Common myeloid progenitor, CD34-positive (primary cell): ENCODE measurements at regions of chr4 and their contacts with region 1.

Region 1: GRCh38 chr4:683982-684622 is 4.8 kb downstream of the SLC49A3 start:
- DNase-seq: peak; percentile 61 to 79 (median 79)
- H3K4me3 ChIP-seq: peak overlapping the region in 1 of 7 experiments; percentile 20
- H3K27ac ChIP-seq: no peak overlapping the region
- H3K4me1 ChIP-seq: peaks cover 0 to 42% (median 30%) of the 10 kb centered on the region in 4 experiments
- H3K27me3 ChIP-seq: no peaks in the 10 kb centered on the region

Region 2: DNA sequence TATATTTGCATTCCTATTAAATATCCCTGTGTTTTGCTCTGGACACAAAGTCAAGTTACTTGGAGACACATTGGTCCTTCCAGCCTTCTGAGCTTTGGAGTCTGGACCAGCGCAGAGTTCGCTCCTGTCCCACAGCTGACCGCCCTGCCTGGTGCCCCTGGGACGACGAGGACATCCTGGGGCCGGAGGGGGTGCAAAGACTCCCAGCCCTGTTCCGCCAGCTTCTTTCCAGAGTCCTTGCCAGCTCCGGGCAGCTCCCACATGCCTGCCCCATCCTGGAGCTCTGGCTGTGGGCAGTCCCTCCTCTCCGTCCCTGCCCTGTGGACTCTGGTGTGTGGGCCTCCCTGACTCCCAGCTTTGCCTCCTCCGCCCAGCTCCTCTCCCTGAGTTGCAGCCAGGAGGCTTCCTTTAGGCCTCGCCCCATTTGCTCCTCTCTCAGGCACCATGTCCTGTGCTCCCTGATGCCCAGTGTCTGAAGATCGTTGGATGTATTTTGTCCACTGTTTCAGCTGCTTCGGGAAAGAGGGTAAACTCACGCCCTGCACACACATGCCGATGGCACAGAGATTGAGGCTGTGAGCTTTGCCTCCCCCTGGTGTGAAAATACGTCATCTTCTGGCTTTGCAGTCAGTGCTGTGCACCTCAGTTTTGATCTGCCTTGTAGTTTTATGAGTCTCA is 16.6 kb after region 1 on chr4:
- CTCF ChIA-PET with region 1: interaction called, 11 read pairs
- POLR2A ChIA-PET with region 1: no interaction called
- DNase-seq: no peak
- H3K4me3 ChIP-seq: no peak overlapping the region
- H3K27ac ChIP-seq: no peak overlapping the region
- H3K4me1 ChIP-seq: peaks cover 0 to 19% (median 12%) of the 10 kb centered on the region in 4 experiments
- H3K27me3 ChIP-seq: no peaks in the 10 kb centered on the region